Colonic mucosa (tissue), 4 donors: ENCODE measurements at regions of chr5 and their contacts with region 1.

Region 1: DNA sequence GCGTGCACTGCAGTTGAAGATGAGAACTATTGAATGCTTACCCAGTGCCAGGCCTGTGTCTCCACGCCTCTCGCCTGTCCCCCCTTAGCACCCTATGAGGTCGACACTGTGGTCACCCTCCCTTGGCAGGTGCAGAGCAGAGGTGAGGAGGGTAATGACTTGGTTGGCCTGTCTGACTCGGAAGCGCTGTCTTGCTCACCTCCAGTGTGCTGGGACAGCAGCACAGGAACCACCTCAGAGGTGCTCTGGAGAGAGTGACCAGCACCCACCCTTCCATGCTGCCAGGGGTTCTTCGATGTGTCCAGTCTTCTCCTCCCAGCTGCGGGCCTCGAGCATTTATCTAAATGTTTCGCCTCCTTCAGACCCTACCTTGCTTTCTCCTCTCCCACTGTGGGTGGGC is 178.3 kb upstream of the IRX2 start:
- DNase-seq: no peak
- H3K4me3 ChIP-seq: no peak overlapping the region
- H3K27ac ChIP-seq: no peak overlapping the region
- H3K4me1 ChIP-seq: no peaks in the 10 kb centered on the region
- H3K27me3 ChIP-seq: no peaks in the 10 kb centered on the region
- CTCF ChIP-seq: no peak

Region 2: GRCh38 chr5:2110137-2110933 is 819.4 kb before region 1 on chr5:
- intact Hi-C with region 1: loop called (anchors 10 kb)
- DNase-seq: no peak
- H3K4me3 ChIP-seq: no peak overlapping the region
- H3K27ac ChIP-seq: no peak overlapping the region
- H3K4me1 ChIP-seq: no peaks in the 10 kb centered on the region
- H3K27me3 ChIP-seq: no peaks in the 10 kb centered on the region
- CTCF ChIP-seq: no peak

Region 3: DNA sequence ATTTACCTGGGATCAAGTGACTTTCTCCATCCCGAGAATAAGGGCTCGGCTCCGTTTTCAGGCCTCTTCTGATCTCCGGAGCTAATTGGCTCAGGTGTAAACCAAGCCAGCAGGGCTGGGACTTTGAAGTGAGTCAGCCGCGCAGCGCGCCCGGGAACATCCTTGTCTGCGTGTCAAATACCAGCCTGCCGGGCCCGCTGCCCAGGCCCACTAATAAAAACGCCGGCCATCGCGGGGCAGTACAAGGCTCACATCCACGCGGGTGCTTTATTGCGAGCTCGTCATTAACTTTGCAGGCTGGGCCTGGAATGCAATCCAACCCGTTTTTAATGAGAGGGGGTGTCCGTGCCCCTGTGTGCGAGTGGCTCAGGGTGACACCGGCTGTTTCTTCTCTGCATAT is 595.1 kb before region 1 on chr5:
- intact Hi-C with region 1: no loop called
- DNase-seq: no peak
- H3K4me3 ChIP-seq: no peak overlapping the region
- H3K27ac ChIP-seq: no peak overlapping the region
- H3K4me1 ChIP-seq: no peaks in the 10 kb centered on the region
- H3K27me3 ChIP-seq: no peaks in the 10 kb centered on the region
- CTCF ChIP-seq: no peak

Region 4: DNA sequence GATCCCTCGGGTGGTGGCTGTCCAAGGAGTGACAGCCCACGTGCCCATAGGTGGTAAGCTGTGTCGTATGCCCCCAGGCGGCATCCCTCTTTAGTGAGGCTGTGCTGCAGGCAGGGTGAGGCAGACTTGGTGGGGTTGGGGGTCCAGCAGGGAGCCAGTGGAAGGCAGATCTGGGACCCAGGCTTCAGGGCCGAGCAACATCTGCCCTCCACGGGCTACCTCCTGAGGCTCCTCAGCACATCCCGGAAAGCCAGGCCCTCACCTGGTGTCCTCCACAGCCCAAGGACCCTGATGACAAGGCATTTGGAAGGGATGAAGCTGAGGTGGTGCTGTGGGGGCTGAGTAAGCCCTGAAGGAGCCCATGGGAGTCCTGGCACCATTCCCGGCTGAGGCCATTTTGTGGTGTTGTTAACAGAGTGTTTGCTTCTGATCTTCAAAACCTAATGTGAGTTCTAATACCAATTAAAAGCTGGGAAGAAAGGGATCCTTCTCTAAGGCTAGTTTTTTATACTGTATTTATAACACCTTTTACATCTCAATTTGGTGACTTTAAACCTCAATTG is 117.5 kb after region 1 on chr5:
- intact Hi-C with region 1: no loop called
- DNase-seq: no peak
- H3K4me3 ChIP-seq: no peak overlapping the region
- H3K27ac ChIP-seq: no peak overlapping the region
- H3K4me1 ChIP-seq: no peaks in the 10 kb centered on the region
- H3K27me3 ChIP-seq: no peaks in the 10 kb centered on the region
- CTCF ChIP-seq: no peak

Region 5: GRCh38 chr5:3107156-3107611 is 177.4 kb after region 1 on chr5:
- intact Hi-C with region 1: no loop called
- DNase-seq: no peak
- H3K4me3 ChIP-seq: no peak overlapping the region
- H3K27ac ChIP-seq: no peak overlapping the region
- H3K4me1 ChIP-seq: no peaks in the 10 kb centered on the region
- H3K27me3 ChIP-seq: no peaks in the 10 kb centered on the region
- CTCF ChIP-seq: no peak